CD4-positive, alpha-beta T cell (primary cell): ENCODE measurements at regions of chr20 and their contacts with region 1.

Region 1: DNA sequence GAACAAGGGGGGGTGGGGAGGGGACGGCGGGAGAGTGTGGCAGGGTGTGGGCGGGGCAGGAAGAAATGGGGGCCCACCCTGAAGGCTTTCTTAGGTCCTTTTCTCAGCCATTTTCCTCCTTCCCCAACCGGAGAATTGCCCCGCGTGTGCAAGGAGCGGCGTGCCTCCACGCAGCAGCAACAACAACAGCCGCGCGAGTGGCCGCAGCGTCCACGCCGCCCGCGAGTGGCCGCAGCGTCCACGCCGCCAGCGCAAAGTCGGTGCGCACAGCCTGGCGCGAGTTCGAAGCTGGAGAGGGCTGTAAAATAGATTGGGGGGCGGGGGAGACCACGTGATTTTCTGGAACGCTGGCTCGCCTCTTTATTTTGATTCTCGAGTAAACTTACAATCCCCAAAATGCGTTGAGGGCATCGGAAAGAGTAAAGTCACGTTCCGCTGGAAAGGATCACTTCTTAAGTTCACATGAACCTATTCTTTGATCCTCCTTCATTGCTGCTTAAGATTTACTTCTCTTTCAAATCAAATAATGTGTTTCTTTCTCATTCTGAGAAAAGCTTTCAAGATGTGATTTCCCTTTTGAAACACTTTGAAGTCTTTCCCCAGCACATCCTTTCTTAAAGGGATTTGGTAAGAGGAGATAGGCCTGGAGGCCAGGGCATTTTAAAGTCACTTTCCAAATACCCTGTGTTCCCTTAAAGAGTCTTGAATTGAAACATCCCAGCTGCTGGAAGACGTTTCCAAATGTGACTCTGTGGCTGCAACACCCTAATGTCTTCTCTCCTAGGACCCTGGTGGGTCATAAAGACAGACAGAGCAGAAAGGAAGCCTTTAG is 66.7 kb upstream of the ZNF217 start:
- DNase-seq: peak in 9 of 14 experiments; percentile 11 to 50 (median 38)
- ATAC-seq: peak; percentile 41
- H3K4me3 ChIP-seq: peak overlapping the region; percentile 53
- H3K4me3 Mint-ChIP-seq: peak overlapping the region; percentile 91
- H3K27ac ChIP-seq: peak overlapping the region; percentile 49 to 66
- H3K27ac Mint-ChIP-seq: peak overlapping the region; percentile 92
- H3K4me1 ChIP-seq: peaks cover 33% of the 10 kb centered on the region
- H3K4me1 Mint-ChIP-seq: peaks cover 76% of the 10 kb centered on the region
- H3K27me3 ChIP-seq: no peaks in the 10 kb centered on the region
- H3K27me3 Mint-ChIP-seq: no peaks in the 10 kb centered on the region
- CTCF ChIP-seq: no peak

Region 2: GRCh38 chr20:53208110-53208832 is 452.0 kb before region 1 on chr20:
- CTCF ChIA-PET with region 1: no interaction called
- POLR2A ChIA-PET with region 1: no interaction called
- intact Hi-C with region 1: no loop called
- DNase-seq: peak in 6 of 14 experiments; percentile 8 to 58 (median 24)
- ATAC-seq: peak; percentile 89
- H3K4me3 ChIP-seq: peak overlapping the region; percentile 23
- H3K4me3 Mint-ChIP-seq: peak overlapping the region; percentile 74
- H3K27ac ChIP-seq: no peak overlapping the region
- H3K27ac Mint-ChIP-seq: peak overlapping the region; percentile 80
- H3K4me1 ChIP-seq: peaks cover 17% of the 10 kb centered on the region
- H3K4me1 Mint-ChIP-seq: peaks cover 20% of the 10 kb centered on the region
- H3K27me3 ChIP-seq: no peaks in the 10 kb centered on the region
- H3K27me3 Mint-ChIP-seq: no peaks in the 10 kb centered on the region
- CTCF ChIP-seq: no peak

Region 3: GRCh38 chr20:53226826-53227225 is 433.5 kb before region 1 on chr20:
- CTCF ChIA-PET with region 1: no interaction called
- POLR2A ChIA-PET with region 1: no interaction called
- intact Hi-C with region 1: no loop called
- DNase-seq: no peak
- ATAC-seq: no peak
- H3K4me3 ChIP-seq: no peak overlapping the region
- H3K4me3 Mint-ChIP-seq: no peak overlapping the region
- H3K27ac ChIP-seq: no peak overlapping the region
- H3K27ac Mint-ChIP-seq: no peak overlapping the region
- H3K4me1 ChIP-seq: no peaks in the 10 kb centered on the region
- H3K4me1 Mint-ChIP-seq: peaks cover 4% of the 10 kb centered on the region
- H3K27me3 ChIP-seq: peaks cover 0 to 4% of the 10 kb centered on the region in 2 experiments
- H3K27me3 Mint-ChIP-seq: peaks cover 12% of the 10 kb centered on the region
- CTCF ChIP-seq: no peak

Region 4: GRCh38 chr20:53594068-53595017 is 66.0 kb before region 1 on chr20:
- CTCF ChIA-PET with region 1: no interaction called
- POLR2A ChIA-PET with region 1: interaction called, 22 read pairs
- intact Hi-C with region 1: no loop called
- DNase-seq: peak; percentile 95 to 100 (median 98)
- ATAC-seq: peak; percentile 63
- H3K4me3 ChIP-seq: peak overlapping the region; percentile 75
- H3K4me3 Mint-ChIP-seq: peak overlapping the region; percentile 93
- H3K27ac ChIP-seq: peak overlapping the region; percentile 63 to 74
- H3K27ac Mint-ChIP-seq: peak overlapping the region; percentile 100
- H3K4me1 ChIP-seq: peaks cover 24% of the 10 kb centered on the region
- H3K4me1 Mint-ChIP-seq: peaks cover 73% of the 10 kb centered on the region
- H3K27me3 ChIP-seq: no peaks in the 10 kb centered on the region
- H3K27me3 Mint-ChIP-seq: no peaks in the 10 kb centered on the region
- CTCF ChIP-seq: no peak

Region 5: GRCh38 chr20:53623454-53624211 is 36.7 kb before region 1 on chr20:
- CTCF ChIA-PET with region 1: interaction called, 4 read pairs
- POLR2A ChIA-PET with region 1: interaction called, 7 read pairs
- intact Hi-C with region 1: loop called in 1 of 2 experiments (anchors 5 kb)
- DNase-seq: peak in 9 of 14 experiments; percentile 20 to 75 (median 41)
- ATAC-seq: peak; percentile 78
- H3K4me3 ChIP-seq: peak overlapping the region; percentile 57
- H3K4me3 Mint-ChIP-seq: peak overlapping the region; percentile 82
- H3K27ac ChIP-seq: peak overlapping the region; percentile 58 to 81
- H3K27ac Mint-ChIP-seq: peak overlapping the region; percentile 92
- H3K4me1 ChIP-seq: peaks cover 34% of the 10 kb centered on the region
- H3K4me1 Mint-ChIP-seq: peaks cover 37% of the 10 kb centered on the region
- H3K27me3 ChIP-seq: no peaks in the 10 kb centered on the region
- H3K27me3 Mint-ChIP-seq: no peaks in the 10 kb centered on the region
- CTCF ChIP-seq: no peak

Region 6: DNA sequence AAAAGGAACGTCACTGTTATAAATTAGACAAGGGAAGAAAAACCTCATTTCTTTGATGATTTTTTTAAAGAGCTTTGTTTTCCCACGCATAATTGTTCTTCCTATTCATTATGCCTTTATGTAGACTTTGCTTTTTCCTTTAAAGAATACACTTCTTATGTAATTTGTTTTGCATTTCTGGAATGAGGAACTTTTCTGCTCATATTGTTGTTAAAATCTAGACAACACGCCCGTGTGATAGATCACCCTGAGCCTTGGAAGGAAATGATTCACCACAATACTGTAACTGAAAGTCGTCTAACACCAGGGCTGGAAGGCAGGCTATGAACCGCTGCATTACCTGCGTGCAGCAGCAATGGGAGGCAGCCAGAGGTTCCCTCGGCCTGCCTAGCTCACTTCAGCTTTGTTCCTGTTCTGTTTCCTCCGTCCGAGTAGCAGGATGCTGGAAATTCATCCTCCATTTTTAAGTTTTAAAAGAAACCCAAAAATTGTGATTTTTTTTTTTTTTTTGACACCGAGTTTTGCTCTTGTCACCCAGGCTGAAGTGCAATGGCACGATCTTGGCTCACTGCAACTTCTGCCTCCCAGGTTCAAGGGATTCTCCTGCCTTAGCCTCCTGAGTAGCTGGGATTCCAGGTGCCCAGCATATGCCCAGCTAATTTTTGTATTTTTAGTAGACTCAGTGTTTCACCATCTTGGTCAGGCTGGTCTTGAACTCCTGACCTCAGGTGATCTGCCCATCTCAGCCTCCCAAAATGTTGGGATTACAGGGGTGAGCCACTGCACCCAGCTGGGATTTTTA is 17.1 kb before region 1 on chr20:
- CTCF ChIA-PET with region 1: interaction called, 6 read pairs
- POLR2A ChIA-PET with region 1: interaction called, 28 read pairs
- intact Hi-C with region 1: loop called in 1 of 2 experiments (anchors 2 kb)
- DNase-seq: peak; percentile 54 to 88 (median 68)
- ATAC-seq: peak; percentile 96
- H3K4me3 ChIP-seq: peak overlapping the region; percentile 18
- H3K4me3 Mint-ChIP-seq: peak overlapping the region; percentile 84
- H3K27ac ChIP-seq: peak overlapping the region; percentile 83 to 85
- H3K27ac Mint-ChIP-seq: peak overlapping the region; percentile 93
- H3K4me1 ChIP-seq: peaks cover 38% of the 10 kb centered on the region
- H3K4me1 Mint-ChIP-seq: peaks cover 53% of the 10 kb centered on the region
- H3K27me3 ChIP-seq: no peaks in the 10 kb centered on the region
- H3K27me3 Mint-ChIP-seq: no peaks in the 10 kb centered on the region
- CTCF ChIP-seq: no peak

Region 7: DNA sequence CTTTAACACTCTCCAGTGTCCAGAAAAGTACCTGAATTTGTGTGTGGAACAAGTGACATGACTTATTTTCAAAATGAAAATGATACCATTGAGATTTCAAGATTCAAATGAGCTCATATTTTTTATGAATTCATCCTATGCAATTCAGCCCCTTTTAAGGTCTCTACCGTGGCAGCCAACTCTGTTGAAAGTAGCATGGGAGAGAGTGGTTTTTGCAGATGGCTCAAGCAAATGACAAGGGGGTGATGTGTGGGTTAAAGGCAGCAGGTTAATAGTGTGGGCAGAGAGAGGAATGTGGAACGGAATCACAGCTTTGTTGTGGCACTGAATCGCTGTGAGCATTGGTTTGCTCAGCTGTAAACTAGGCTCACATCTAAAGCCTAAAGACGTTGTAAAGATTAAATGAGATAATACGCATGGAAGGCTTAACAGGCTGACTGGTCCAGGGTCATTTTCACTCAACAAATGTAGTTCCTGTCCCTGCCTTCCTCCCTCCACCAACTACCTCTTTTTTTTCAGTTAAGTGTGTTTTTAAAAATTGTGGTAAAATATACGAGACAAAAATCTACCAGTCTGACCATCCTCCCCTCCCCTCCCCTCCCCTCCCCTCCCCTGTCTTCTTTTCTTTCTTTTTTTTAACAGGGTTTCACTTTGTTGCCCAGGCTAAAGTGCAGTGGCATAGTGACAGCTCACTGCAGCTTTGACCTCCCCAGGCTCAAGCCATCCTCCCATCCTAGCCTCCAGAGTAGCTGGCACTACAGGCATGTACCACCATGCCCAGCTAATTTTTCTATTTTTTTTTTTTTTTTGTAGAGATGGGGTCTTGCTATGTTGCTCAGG is 48.1 kb after region 1 on chr20:
- CTCF ChIA-PET with region 1: no interaction called
- POLR2A ChIA-PET with region 1: interaction called, 16 read pairs
- intact Hi-C with region 1: loop called in 1 of 2 experiments (anchors 5 kb)
- DNase-seq: peak in 6 of 14 experiments; percentile 2 to 51 (median 26)
- ATAC-seq: peak; percentile 38
- H3K4me3 ChIP-seq: no peak overlapping the region
- H3K4me3 Mint-ChIP-seq: peak overlapping the region; percentile 69
- H3K27ac ChIP-seq: peak overlapping the region; percentile 52 to 57
- H3K27ac Mint-ChIP-seq: peak overlapping the region; percentile 92
- H3K4me1 ChIP-seq: peaks cover 45% of the 10 kb centered on the region
- H3K4me1 Mint-ChIP-seq: peaks cover 47% of the 10 kb centered on the region
- H3K27me3 ChIP-seq: no peaks in the 10 kb centered on the region
- H3K27me3 Mint-ChIP-seq: no peaks in the 10 kb centered on the region
- CTCF ChIP-seq: no peak

Region 8: GRCh38 chr20:53750827-53751619 is 90.7 kb after region 1 on chr20:
- CTCF ChIA-PET with region 1: no interaction called
- POLR2A ChIA-PET with region 1: interaction called, 4 read pairs
- intact Hi-C with region 1: loop called in 1 of 2 experiments (anchors 5 kb)
- DNase-seq: peak in 8 of 14 experiments; percentile 2 to 75 (median 34)
- ATAC-seq: peak; percentile 57
- H3K4me3 ChIP-seq: no peak overlapping the region
- H3K4me3 Mint-ChIP-seq: peak overlapping the region; percentile 65
- H3K27ac ChIP-seq: peak overlapping the region; percentile 53 to 74
- H3K27ac Mint-ChIP-seq: peak overlapping the region; percentile 93
- H3K4me1 ChIP-seq: peaks cover 60% of the 10 kb centered on the region
- H3K4me1 Mint-ChIP-seq: peaks cover 76% of the 10 kb centered on the region
- H3K27me3 ChIP-seq: no peaks in the 10 kb centered on the region
- H3K27me3 Mint-ChIP-seq: no peaks in the 10 kb centered on the region
- CTCF ChIP-seq: no peak

Region 9: GRCh38 chr20:54062812-54063280 is 402.6 kb after region 1 on chr20:
- CTCF ChIA-PET with region 1: no interaction called
- POLR2A ChIA-PET with region 1: no interaction called
- intact Hi-C with region 1: no loop called
- DNase-seq: peak in 3 of 14 experiments; percentile 40 to 52 (median 48)
- ATAC-seq: no peak
- H3K4me3 ChIP-seq: no peak overlapping the region
- H3K4me3 Mint-ChIP-seq: no peak overlapping the region
- H3K27ac ChIP-seq: no peak overlapping the region
- H3K27ac Mint-ChIP-seq: no peak overlapping the region
- H3K4me1 ChIP-seq: peaks cover 8% of the 10 kb centered on the region
- H3K4me1 Mint-ChIP-seq: peaks cover 5% of the 10 kb centered on the region
- H3K27me3 ChIP-seq: no peaks in the 10 kb centered on the region
- H3K27me3 Mint-ChIP-seq: no peaks in the 10 kb centered on the region
- CTCF ChIP-seq: peak; percentile 73